ENCODE measurements at regions of chr12 and their contacts with region 1.

Region 1: DNA sequence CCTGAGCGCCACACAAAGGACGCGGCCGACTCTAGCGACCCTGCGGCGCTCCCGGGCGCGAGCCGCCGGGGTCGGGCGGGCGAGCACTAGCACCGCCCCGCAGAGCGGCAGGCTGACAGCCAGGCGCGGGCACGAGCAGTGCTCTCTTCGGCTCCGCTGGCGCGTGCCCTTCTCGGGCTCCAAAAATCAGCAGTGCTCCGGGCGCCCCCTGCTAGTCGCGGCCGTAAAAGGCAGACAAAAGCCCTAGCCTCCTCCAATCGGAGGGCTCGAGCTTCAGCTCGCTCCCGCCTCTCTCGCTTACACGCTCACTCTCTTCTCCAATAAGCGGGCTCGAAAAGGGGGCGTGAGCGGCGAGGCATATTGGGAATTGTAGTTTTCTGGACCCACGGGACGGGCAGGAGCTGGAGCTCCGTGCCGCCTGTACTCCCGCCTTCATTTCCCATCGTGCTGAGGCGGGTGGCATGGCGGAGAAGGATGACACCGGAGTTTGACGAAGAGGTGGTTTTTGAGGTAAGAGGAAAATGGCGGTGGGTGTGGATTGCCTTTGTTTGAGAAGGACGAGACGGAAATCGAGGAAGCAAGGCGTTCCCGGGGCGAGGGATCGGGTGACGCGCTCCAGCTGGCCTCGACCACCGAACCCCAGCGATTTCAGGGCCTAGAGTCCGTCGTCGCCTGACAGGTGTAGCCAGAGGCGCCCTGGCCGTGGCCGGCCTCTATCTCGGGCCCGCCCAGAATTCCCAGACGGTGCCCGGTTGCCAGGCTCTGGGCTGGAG is at the starts of genes FGD6 and VEZT:
- DNase-seq: peak; percentile 98
- ATAC-seq: peak; percentile 94
- H3K4me3 ChIP-seq: peak within 1 kb of the TSS; percentile 84 to 95 (median 87)
- H3K27ac ChIP-seq: peak within 1 kb of the TSS; percentile 86
- H3K4me1 ChIP-seq: peaks cover 40% of the 10 kb centered on the region
- H3K27me3 ChIP-seq: no peaks in the 10 kb centered on the region; a peak in 1 of 5 replicates
- CTCF ChIP-seq: peak; percentile 82
- EP300 ChIP-seq: no peak
- POLR2A ChIP-seq: peak; percentile 78 to 79
- RAD21 ChIP-seq: peak; percentile 75
- total RNA-seq, gene FGD6: 4.3 and 5.3 TPM in 2 replicates
- total RNA-seq, gene VEZT: 29.3 and 35.5 TPM in 2 replicates

Region 2: DNA sequence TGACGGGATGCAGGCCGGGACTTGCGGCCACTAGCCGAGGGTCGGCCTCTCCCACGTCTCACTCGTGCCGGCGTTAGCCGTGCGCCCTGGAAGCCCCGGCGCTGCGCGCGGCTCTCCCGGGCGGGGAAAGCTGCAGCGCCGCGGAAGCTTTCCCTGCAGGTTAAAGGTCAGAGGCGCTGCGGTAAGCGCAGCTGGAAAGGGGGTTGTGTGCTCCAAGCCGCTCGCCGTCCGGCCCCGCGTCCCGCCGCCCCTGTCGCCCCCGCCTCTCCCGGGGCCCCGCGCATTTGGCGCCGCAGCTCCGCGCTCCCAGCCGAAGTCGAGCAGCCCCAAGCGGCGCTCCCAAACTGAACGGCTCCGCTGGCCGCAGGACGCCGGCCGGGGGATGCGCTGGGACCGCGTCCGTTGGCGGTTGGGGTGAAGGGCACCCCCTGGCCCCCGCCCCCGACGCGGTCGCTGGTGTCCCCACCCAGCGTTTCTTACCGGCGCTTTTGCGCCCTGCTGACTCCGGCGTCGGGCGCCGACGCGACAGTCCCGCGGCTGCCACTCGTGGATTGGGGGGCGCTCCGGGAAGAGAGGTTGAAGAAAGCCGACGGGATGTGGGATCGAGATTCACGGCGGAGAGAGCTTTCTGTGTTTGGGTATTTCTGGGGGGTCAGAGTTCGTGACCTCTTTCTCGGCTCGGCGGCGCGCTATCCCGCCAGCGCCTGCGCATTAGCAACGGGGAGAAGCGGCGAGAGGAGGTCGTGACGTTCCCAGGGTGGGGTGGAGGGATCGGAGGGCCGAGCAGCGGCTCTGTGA is 144.5 kb before region 1 on chr12 and contains the start of gene NR2C1:
- CTCF ChIA-PET with region 1: no interaction called
- POLR2A ChIA-PET with region 1: interaction called, 9 read pairs
- in situ Hi-C with region 1: no loop called
- intact Hi-C with region 1: loop called (anchors 5 kb)
- DNase-seq: peak; percentile 93
- ATAC-seq: peak; percentile 93
- H3K4me3 ChIP-seq: peak within 1 kb of the TSS; percentile 91 to 96 (median 95)
- H3K27ac ChIP-seq: peak within 1 kb of the TSS; percentile 90
- H3K4me1 ChIP-seq: peaks cover 42% of the 10 kb centered on the region
- H3K27me3 ChIP-seq: no peaks in the 10 kb centered on the region; a peak in 1 of 5 replicates
- CTCF ChIP-seq: peak; percentile 92
- EP300 ChIP-seq: 0 out of 4 replicates have a peak, but pooled peaks of 1 of the 2 experiments have one; percentile 8
- POLR2A ChIP-seq: peak; percentile 65 to 66
- RAD21 ChIP-seq: 0 out of 2 replicates have a peak, but pooled peaks have one; percentile 13
- total RNA-seq, gene NR2C1: 22.4 and 38.0 TPM in 2 replicates

Region 3: GRCh38 chr12:95102916-95103671 is 114.5 kb before region 1 on chr12:
- CTCF ChIA-PET with region 1: no interaction called
- POLR2A ChIA-PET with region 1: no interaction called
- in situ Hi-C with region 1: no loop called
- intact Hi-C with region 1: no loop called
- DNase-seq: peak; percentile 18
- ATAC-seq: no peak
- H3K4me3 ChIP-seq: no peak overlapping the region
- H3K27ac ChIP-seq: no peak overlapping the region
- H3K4me1 ChIP-seq: peaks cover 11% of the 10 kb centered on the region
- H3K27me3 ChIP-seq: no peaks in the 10 kb centered on the region
- CTCF ChIP-seq: no peak
- EP300 ChIP-seq: no peak
- POLR2A ChIP-seq: no peak
- RAD21 ChIP-seq: no peak

Region 4: DNA sequence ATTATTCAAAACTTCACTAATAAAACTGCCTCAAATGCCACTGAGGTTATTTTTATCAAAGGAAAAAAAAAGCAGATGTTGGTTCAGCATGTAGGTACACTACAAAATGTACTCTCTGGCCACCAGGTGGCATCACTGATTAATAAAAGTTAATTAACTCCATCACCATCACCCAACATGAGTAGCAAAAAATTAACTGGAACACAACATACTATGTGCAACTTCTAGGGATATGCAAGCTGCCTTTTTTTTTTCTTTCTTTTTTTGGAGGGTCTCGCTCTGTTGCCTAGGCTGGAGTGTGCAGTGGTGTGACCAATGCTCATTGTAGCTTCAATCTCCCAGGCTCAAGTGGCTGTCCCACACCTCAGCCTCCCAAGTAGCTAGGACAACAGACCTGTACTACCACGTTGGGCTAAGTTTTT is 100.4 kb before region 1 on chr12:
- CTCF ChIA-PET with region 1: interaction called, 7 read pairs
- POLR2A ChIA-PET with region 1: interaction called, 5 read pairs
- in situ Hi-C with region 1: no loop called
- intact Hi-C with region 1: loop called (anchors 1 kb)
- DNase-seq: peak; percentile 70
- ATAC-seq: peak; percentile 86
- H3K4me3 ChIP-seq: no peak overlapping the region
- H3K27ac ChIP-seq: no peak overlapping the region
- H3K4me1 ChIP-seq: peaks cover 15% of the 10 kb centered on the region
- H3K27me3 ChIP-seq: no peaks in the 10 kb centered on the region
- CTCF ChIP-seq: peak; percentile 77
- EP300 ChIP-seq: no peak
- POLR2A ChIP-seq: no peak
- RAD21 ChIP-seq: peak; percentile 77; the same call in 1 of the 2 replicates

Region 5: GRCh38 chr12:95318071-95318545 is 100.5 kb after region 1 on chr12:
- CTCF ChIA-PET with region 1: no interaction called
- POLR2A ChIA-PET with region 1: interaction called, 6 read pairs
- in situ Hi-C with region 1: no loop called
- intact Hi-C with region 1: loop called (anchors 1 kb)
- DNase-seq: peak; percentile 98
- ATAC-seq: peak; percentile 95
- H3K4me3 ChIP-seq: no peak overlapping the region
- H3K27ac ChIP-seq: peak overlapping the region; percentile 21
- H3K4me1 ChIP-seq: peaks cover 48% of the 10 kb centered on the region
- H3K27me3 ChIP-seq: peaks cover 0 to 31% of the 10 kb centered on the region in 2 experiments; a peak in 2 of 5 replicates
- CTCF ChIP-seq: no peak
- EP300 ChIP-seq: peak in 1 of 2 experiments; percentile 93; a peak in 3 of 4 replicates
- POLR2A ChIP-seq: no peak
- RAD21 ChIP-seq: no peak

Region 6: DNA sequence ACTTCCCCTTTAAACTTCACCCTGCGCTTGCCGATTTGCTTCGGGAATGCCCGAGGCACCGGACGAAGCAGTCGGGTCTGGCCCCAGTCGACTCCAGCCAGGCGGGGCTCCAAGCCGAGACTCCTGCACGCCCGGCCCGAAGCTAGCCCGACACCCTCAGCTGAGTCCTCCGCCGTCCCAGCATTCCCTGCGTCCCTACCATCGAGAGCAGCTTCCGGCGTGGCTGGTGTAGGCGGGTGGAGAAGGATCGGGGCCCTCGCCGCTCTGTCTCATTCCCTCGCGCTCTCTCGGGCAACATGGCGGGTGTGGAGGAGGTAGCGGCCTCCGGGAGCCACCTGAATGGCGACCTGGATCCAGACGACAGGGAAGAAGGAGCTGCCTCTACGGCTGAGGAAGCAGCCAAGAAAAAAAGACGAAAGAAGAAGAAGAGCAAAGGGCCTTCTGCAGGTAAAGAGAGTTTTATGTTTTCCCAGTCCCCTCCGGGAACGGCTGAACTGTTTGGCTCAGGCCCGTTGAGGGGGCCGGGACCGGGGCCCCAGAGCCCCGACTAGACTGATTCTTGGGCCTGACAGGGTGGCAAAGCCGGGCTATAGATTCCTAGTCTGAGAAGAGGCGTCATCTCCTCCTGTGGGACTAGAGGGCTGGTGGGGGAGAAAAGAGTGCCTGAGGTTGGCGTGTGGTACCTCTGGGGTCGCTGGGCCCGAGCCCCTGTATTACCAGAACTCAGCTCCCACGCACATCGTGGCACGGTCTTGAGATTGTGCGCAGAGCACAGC is 256.5 kb after region 1 on chr12 and contains the start of gene METAP2:
- CTCF ChIA-PET with region 1: no interaction called
- POLR2A ChIA-PET with region 1: interaction called, 7 read pairs
- in situ Hi-C with region 1: no loop called
- intact Hi-C with region 1: loop called (anchors 1 kb)
- DNase-seq: peak; percentile 92
- ATAC-seq: peak; percentile 99
- H3K4me3 ChIP-seq: peak within 1 kb of the TSS; percentile 95 to 98 (median 95)
- H3K27ac ChIP-seq: peak within 1 kb of the TSS; percentile 86
- H3K4me1 ChIP-seq: peaks cover 38% of the 10 kb centered on the region
- H3K27me3 ChIP-seq: no peaks in the 10 kb centered on the region; a peak in 1 of 5 replicates
- CTCF ChIP-seq: peak; percentile 24; the same call in 1 of the 2 replicates
- EP300 ChIP-seq: no peak; a peak in 1 of 4 replicates
- POLR2A ChIP-seq: peak; percentile 94 to 95
- RAD21 ChIP-seq: 0 out of 2 replicates have a peak, but pooled peaks have one; percentile 38
- total RNA-seq, gene METAP2: 131 and 204 TPM in 2 replicates

Region 7: GRCh38 chr12:95532851-95533250 is 315.3 kb after region 1 on chr12:
- CTCF ChIA-PET with region 1: no interaction called
- POLR2A ChIA-PET with region 1: no interaction called
- in situ Hi-C with region 1: no loop called
- intact Hi-C with region 1: loop called (anchors 2 kb)
- DNase-seq: peak; percentile 5
- ATAC-seq: no peak
- H3K4me3 ChIP-seq: no peak overlapping the region
- H3K27ac ChIP-seq: no peak overlapping the region
- H3K4me1 ChIP-seq: no peaks in the 10 kb centered on the region
- H3K27me3 ChIP-seq: peaks cover 0 to 9% of the 10 kb centered on the region in 2 experiments; a peak in 1 of 5 replicates
- CTCF ChIP-seq: no peak
- EP300 ChIP-seq: no peak
- POLR2A ChIP-seq: no peak
- RAD21 ChIP-seq: no peak

Region 8: DNA sequence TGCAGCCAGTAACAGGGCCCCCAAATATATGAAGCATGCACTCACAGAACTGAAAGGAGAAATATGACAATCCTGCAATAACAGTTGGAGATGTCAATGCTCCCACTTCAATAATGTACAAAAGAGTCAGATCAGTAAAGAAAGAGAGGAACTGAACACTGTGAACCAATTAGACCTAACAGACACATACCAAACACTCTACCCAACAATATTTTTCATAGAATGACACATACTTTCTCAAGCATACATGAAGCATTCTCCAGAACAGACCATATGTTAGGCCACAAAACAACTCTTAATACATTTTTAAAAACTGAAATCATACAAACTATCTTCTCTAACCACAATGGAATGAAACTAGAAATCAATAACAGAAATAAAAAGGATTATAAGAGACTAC is 1056.8 kb after region 1 on chr12:
- CTCF ChIA-PET with region 1: no interaction called
- POLR2A ChIA-PET with region 1: no interaction called
- in situ Hi-C with region 1: no loop called
- intact Hi-C with region 1: loop called (anchors 5 kb)
- DNase-seq: no peak
- ATAC-seq: no peak
- H3K4me3 ChIP-seq: no peak overlapping the region
- H3K27ac ChIP-seq: no peak overlapping the region
- H3K4me1 ChIP-seq: no peaks in the 10 kb centered on the region
- H3K27me3 ChIP-seq: no peaks in the 10 kb centered on the region
- CTCF ChIP-seq: no peak
- EP300 ChIP-seq: no peak
- POLR2A ChIP-seq: no peak
- RAD21 ChIP-seq: no peak